HepG2 (cell line): ENCODE measurements at regions of chr12 and their contacts with region 1.

Region 1: GRCh38 chr12:88493636-88494035 is 86.6 kb downstream of the KITLG start:
- DNase-seq: no peak
- ATAC-seq: no peak
- H3K4me3 ChIP-seq: no peak overlapping the region
- H3K27ac ChIP-seq: no peak overlapping the region
- H3K4me1 ChIP-seq: no peaks in the 10 kb centered on the region
- H3K27me3 ChIP-seq: no peaks in the 10 kb centered on the region
- CTCF ChIP-seq: no peak
- EP300 ChIP-seq: no peak
- POLR2A ChIP-seq: no peak
- RAD21 ChIP-seq: no peak

Region 2: GRCh38 chr12:88448337-88448915 is 45.2 kb before region 1 on chr12:
- CTCF ChIA-PET with region 1: no interaction called
- POLR2A ChIA-PET with region 1: no interaction called
- in situ Hi-C with region 1: no loop called
- intact Hi-C with region 1: no loop called
- DNase-seq: no peak
- ATAC-seq: no peak
- H3K4me3 ChIP-seq: no peak overlapping the region
- H3K27ac ChIP-seq: no peak overlapping the region
- H3K4me1 ChIP-seq: no peaks in the 10 kb centered on the region
- H3K27me3 ChIP-seq: no peaks in the 10 kb centered on the region
- CTCF ChIP-seq: no peak
- EP300 ChIP-seq: no peak
- POLR2A ChIP-seq: no peak
- RAD21 ChIP-seq: no peak

Region 3: DNA sequence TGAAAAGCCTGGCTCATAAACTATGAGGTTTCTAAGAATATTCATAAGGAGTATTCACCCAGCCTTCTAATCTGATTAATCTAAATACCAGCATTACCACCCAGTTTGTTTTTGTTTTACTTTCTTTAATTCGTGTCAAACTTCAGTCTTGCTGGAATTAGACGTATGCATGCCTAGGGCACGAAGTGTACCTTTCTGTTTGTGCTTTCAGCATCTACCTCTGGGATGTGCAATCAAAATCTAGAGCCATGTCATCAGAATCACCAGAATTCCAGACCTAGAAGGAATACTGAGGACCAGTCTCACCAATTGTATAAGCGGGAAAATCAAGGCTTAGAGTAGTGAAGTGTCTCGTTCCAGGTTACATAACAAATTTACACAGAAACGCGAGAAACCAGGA is 29.3 kb after region 1 on chr12:
- CTCF ChIA-PET with region 1: no interaction called
- POLR2A ChIA-PET with region 1: no interaction called
- in situ Hi-C with region 1: no loop called
- intact Hi-C with region 1: loop called (anchors 1 kb)
- DNase-seq: no peak
- ATAC-seq: no peak
- H3K4me3 ChIP-seq: no peak overlapping the region
- H3K27ac ChIP-seq: no peak overlapping the region
- H3K4me1 ChIP-seq: no peaks in the 10 kb centered on the region
- H3K27me3 ChIP-seq: no peaks in the 10 kb centered on the region; a peak in 1 of 5 replicates
- CTCF ChIP-seq: no peak
- EP300 ChIP-seq: no peak
- POLR2A ChIP-seq: no peak
- RAD21 ChIP-seq: no peak